Stomach (tissue), 19 donors: ENCODE measurements at regions of chr7 and their contacts with region 1.

Region 1: DNA sequence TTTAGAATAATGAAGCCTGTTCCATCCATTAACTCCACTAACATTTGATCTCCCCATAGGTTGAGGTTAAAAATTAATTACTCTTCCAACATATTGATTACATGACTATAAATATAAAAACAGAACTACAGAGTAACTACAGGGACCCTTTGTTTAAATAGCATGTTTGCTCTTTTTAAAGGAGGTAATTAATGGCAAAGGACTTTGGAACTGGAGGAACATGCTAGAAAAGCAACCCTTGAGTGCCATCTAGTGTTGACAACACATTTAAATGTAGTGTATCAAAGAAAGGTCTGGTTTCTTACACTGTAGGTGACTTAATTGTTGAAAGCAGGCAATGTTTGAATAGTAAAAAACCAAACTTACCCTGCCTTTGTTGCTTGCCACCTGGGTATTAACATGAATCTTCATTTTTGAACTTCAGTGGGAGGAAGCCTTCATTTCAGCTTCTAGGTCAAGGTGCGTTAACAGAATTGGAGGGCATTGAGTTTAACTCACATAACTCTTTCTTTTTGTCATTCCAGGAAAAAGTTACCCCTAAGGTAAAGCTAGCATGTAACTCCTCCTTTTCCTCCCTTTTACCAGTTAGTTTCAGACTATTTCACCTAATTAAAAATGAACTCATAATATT is 52.6 kb upstream of the CAPZA2 start:
- DNase-seq: peak in 1 of 2 donors; percentile 93
- H3K4me3 ChIP-seq: no peak overlapping the region
- H3K27ac ChIP-seq: peak overlapping the region in 4 of 5 donors; percentile 35 to 64 (median 58)
- H3K4me1 ChIP-seq: peaks cover 0 to 45% (median 26%) of the 10 kb centered on the region in 4 donors
- H3K27me3 ChIP-seq: no peaks in the 10 kb centered on the region
- CTCF ChIP-seq: peak in 4 of 7 experiments; percentile 27 to 73 (median 40)
- EP300 ChIP-seq: no peak
- POLR2A ChIP-seq: no peak

Region 2: GRCh38 chr7:116661865-116662264 is 147.9 kb before region 1 on chr7:
- intact Hi-C with region 1: no loop called
- DNase-seq: no peak
- H3K4me3 ChIP-seq: no peak overlapping the region
- H3K27ac ChIP-seq: no peak overlapping the region
- H3K4me1 ChIP-seq: no peaks in the 10 kb centered on the region
- H3K27me3 ChIP-seq: no peaks in the 10 kb centered on the region
- CTCF ChIP-seq: no peak
- EP300 ChIP-seq: no peak
- POLR2A ChIP-seq: no peak

Region 3: DNA sequence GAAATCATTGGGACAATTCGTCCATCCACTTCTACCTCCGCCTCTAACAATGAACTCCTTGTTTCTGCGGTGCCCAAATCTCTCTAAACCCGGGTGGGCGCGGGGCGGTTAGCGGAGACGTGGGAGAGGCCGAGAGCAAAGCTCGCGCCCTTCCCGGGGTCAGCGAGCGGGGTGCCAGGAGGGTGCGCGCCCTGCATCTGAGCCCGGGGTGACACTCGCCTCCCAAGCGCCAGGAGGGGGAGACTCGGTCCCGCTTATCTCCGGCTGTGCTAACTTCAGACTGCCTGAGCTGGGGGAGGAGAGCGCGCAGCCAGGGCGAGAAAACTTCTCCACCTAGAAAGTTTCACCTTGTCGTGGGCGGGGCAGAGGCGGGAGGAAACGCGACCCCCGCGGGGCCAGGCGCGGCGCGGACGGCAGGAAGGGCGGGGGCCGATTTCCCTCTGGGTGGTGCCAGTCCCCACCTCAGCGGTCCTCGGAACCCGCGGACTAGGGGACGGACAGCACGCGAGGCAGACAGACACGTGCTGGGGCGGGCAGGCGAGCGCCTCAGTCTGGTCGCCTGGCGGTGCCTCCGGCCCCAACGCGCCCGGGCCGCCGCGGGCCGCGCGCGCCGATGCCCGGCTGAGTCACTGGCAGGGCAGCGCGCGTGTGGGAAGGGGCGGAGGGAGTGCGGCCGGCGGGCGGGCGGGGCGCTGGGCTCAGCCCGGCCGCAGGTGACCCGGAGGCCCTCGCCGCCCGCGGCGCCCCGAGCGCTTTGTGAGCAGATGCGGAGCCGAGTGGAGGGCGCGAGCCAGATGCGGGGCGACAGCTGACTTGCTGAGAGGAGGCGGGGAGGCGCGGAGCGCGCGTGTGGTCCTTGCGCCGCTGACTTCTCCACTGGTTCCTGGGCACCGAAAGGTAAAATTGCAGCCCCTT is 137.8 kb before region 1 on chr7 and contains the start of gene MET:
- intact Hi-C with region 1: loop called (anchors 10 kb)
- DNase-seq: peak; percentile 84 to 94
- H3K4me3 ChIP-seq: peak within 1 kb of the TSS; percentile 53 to 65 (median 57)
- H3K27ac ChIP-seq: peak within 1 kb of the TSS; percentile 85 to 99 (median 88)
- H3K4me1 ChIP-seq: peaks cover 0 to 32% (median 22%) of the 10 kb centered on the region in 4 donors
- H3K27me3 ChIP-seq: peaks cover 0 to 17% (median 0%) of the 10 kb centered on the region in 3 donors
- CTCF ChIP-seq: peak in 5 of 7 experiments; percentile 43 to 72 (median 53)
- EP300 ChIP-seq: no peak
- POLR2A ChIP-seq: peak in 1 of 4 donors; percentile 4
- total RNA-seq, gene MET: 0.58 to 36.2 (median 14.5) TPM

Region 4: GRCh38 chr7:116741625-116742316 is 68.0 kb before region 1 on chr7:
- intact Hi-C with region 1: no loop called
- DNase-seq: peak in 1 of 2 donors; percentile 46
- H3K4me3 ChIP-seq: no peak overlapping the region
- H3K27ac ChIP-seq: no peak overlapping the region
- H3K4me1 ChIP-seq: peaks cover 4 to 14% (median 9%) of the 10 kb centered on the region in 4 donors
- H3K27me3 ChIP-seq: no peaks in the 10 kb centered on the region
- CTCF ChIP-seq: no peak
- EP300 ChIP-seq: no peak
- POLR2A ChIP-seq: no peak

Region 5: GRCh38 chr7:117385340-117386109 is 575.8 kb after region 1 on chr7:
- intact Hi-C with region 1: no loop called
- DNase-seq: peak in 1 of 2 donors; percentile 28
- H3K4me3 ChIP-seq: no peak overlapping the region
- H3K27ac ChIP-seq: no peak overlapping the region
- H3K4me1 ChIP-seq: no peaks in the 10 kb centered on the region
- H3K27me3 ChIP-seq: no peaks in the 10 kb centered on the region
- CTCF ChIP-seq: peak in 1 of 7 experiments; percentile 7
- EP300 ChIP-seq: no peak
- POLR2A ChIP-seq: no peak